ENCODE measurements at regions of chr3 and their contacts with region 1.

Region 1: DNA sequence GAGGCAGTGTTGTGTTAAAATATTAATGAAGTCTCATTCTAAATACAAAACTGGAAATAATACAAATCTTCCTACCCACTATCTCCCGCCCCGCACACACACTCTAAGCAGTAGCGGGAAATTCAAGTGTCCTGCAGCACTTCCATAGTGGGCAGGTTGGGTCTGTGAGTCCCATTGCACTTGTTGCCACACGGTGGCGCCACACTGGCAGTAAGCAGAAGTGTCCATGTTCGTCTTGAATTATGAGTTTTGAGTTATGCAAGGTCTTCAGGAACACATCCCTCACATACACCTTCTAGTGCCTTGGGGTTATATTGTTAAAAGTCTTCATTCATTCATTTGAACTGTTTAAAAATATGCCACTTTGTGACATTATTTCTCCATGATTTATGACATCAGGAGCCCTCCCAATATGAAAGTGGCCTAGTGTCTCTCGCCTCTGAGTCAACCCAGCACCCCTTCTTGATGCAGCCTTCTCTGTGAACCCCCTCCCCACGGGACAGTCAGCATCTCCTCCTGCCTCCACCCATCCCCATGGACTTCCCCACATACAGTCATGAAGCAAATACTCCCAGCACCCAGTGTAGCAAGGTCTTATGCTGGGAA is 17.6 kb upstream of the CCDC174 start:
- DNase-seq: peak; percentile 73
- H3K4me3 ChIP-seq: no peak overlapping the region
- H3K27ac ChIP-seq: no peak overlapping the region
- H3K4me1 ChIP-seq: no peaks in the 10 kb centered on the region
- H3K27me3 ChIP-seq: peaks cover 28% of the 10 kb centered on the region
- CTCF ChIP-seq: peak; percentile 96

Region 2: GRCh38 chr3:14614189-14614588 is 19.7 kb before region 1 on chr3:
- CTCF ChIA-PET with region 1: no interaction called
- POLR2A ChIA-PET with region 1: interaction called, 11 read pairs
- intact Hi-C with region 1: no loop called
- DNase-seq: no peak
- H3K4me3 ChIP-seq: no peak overlapping the region
- H3K27ac ChIP-seq: no peak overlapping the region
- H3K4me1 ChIP-seq: peaks cover 10% of the 10 kb centered on the region
- H3K27me3 ChIP-seq: peaks cover 3% of the 10 kb centered on the region
- CTCF ChIP-seq: no peak

Region 3: DNA sequence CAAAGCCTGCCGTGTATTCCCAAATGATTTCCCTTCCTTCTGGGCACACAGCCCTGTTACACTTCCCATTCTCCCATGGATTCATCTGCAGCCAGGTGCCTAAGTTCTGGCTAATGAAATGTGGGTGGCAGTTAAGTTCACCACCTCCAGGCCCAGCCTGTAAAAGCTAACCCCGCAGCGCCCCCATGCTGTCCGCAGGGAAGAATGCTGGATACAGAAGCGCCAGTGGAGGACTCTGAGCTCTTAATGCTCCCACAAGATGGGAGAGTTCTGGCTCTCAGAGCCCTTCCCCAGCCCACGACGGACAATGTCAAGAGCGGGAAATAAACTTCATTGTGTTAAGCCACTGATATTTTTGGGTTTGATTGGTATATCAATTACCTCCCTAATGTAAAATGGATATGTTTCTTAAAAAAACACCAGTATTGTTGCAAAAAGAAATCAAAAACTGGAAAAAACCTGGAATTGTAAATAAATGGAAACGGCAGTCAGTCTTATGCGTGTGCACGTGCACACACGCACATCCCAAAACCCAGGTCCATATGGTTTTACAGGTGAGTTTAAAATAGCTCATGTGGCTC is 147.1 kb after region 1 on chr3:
- CTCF ChIA-PET with region 1: interaction called, 3 read pairs
- POLR2A ChIA-PET with region 1: no interaction called
- intact Hi-C with region 1: loop called (anchors 5 kb)
- DNase-seq: peak; percentile 46
- H3K4me3 ChIP-seq: no peak overlapping the region
- H3K27ac ChIP-seq: no peak overlapping the region
- H3K4me1 ChIP-seq: no peaks in the 10 kb centered on the region
- H3K27me3 ChIP-seq: peaks cover 5% of the 10 kb centered on the region
- CTCF ChIP-seq: peak; percentile 65